Activated CD8-positive, alpha-beta T cell treated with anti-CD3 and anti-CD28 coated beads, Interleukin-2, amount 10 ng/mL, durations not matched to agents 7 days and 5 days (primary cell): ENCODE measurements at regions of chr3 and their contacts with region 1.

Region 1: DNA sequence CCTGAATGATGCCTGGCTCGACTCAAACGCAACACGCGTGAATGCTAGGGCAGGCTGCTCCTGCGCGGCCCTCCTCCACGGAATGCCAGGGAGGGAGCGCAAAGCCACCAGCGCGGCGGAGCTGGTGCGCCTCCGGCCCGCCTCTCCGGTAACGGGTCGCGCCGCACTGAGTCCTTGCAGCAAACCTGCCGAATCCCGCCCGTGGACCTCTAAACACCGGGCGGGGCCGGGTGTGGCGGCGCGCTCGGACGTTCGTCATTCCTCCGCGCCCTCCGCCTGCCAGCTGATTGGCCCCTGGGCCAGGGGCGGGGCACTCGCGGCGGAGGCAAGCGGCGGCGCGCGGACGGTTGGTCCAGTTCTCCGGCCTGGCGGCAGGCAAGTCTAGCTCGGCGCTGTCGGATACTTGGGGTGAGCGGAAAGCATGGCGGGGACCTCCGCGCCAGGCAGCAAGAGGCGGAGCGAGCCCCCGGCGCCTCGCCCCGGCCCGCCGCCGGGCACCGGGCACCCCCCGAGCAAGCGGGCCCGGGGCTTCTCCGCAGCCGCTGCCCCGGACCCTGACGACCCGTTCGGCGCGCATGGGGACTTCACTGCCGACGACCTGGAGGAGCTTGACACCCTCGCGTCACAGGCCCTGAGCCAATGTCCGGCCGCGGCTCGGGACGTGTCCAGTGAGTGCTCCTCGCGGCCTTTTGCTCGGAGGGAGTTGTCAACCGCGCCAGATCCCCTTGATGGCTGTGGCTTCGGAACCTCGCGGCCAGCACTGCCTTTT is at the start of gene ATRIP:
- DNase-seq: peak; percentile 89
- ATAC-seq: peak; percentile 97
- H3K4me3 Mint-ChIP-seq: peak within 1 kb of the TSS; percentile 84
- H3K27ac Mint-ChIP-seq: peak within 1 kb of the TSS; percentile 87
- H3K4me1 Mint-ChIP-seq: peaks cover 46% of the 10 kb centered on the region
- H3K27me3 Mint-ChIP-seq: no peaks in the 10 kb centered on the region
- total RNA-seq, gene ATRIP: 18.8 to 20.3 TPM

Region 2: GRCh38 chr3:48507351-48508061 is 60.9 kb after region 1 on chr3:
- CTCF ChIA-PET with region 1: interaction called, 13 read pairs
- POLR2A ChIA-PET with region 1: no interaction called
- DNase-seq: peak; percentile 86
- ATAC-seq: peak; percentile 87
- H3K4me3 Mint-ChIP-seq: no peak overlapping the region
- H3K27ac Mint-ChIP-seq: peak overlapping the region; percentile 81
- H3K4me1 Mint-ChIP-seq: peaks cover 53% of the 10 kb centered on the region
- H3K27me3 Mint-ChIP-seq: peaks cover 6% of the 10 kb centered on the region

Region 3: DNA sequence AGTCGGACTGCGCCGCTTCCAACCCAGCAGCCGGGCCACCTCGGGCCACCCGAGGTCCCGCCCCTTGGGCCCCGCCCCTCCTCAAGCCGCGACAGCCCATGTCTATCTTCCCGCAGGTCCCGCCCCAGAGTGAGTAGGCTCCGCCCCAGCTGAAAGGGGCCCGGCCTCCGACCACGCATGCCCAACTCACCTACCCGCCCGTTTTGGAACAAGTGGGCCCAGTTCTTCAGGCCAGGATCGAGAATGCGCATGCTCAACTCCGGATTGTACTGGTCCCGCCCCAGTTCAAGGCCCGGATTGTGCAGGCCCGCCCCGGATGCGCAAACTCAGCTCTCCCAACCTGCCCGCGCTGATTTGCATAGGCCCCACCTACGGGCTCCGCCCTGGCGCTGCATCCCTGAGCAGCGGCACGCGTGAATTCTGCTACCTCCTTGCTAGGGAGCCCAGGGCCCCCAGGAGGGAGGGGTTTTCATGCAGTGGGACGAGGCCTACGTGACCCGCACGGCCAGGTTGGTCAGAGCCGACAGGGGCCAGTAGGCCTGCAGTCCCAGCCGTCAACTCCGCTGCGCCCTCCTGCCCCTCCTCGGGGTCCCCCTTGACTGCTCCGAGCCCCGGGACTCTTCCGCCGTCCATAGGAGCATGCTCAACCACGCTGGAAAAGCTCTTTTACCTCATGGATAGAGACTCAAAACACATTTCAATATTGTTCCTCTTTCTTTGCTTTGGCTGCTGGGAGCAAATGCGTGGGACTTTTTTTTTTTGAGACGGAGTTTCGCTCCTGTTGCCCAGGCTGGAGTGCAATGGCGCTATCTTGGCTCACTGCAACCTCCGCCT is 110.4 kb after region 1 on chr3 and contains the start of gene PFKFB4:
- CTCF ChIA-PET with region 1: interaction called, 10 read pairs
- POLR2A ChIA-PET with region 1: interaction called, 3 read pairs
- DNase-seq: peak; percentile 100
- ATAC-seq: peak; percentile 92
- H3K4me3 Mint-ChIP-seq: peak within 1 kb of the TSS; percentile 85
- H3K27ac Mint-ChIP-seq: peak within 1 kb of the TSS; percentile 83
- H3K4me1 Mint-ChIP-seq: peaks cover 66% of the 10 kb centered on the region
- H3K27me3 Mint-ChIP-seq: peaks cover 3% of the 10 kb centered on the region
- total RNA-seq, gene PFKFB4: 42.8 to 49.1 TPM